MCF 10A (cell line): ENCODE measurements at regions of chr13 and their contacts with region 1.

Region 1: GRCh38 chr13:31044377-31045285 is 112.2 kb downstream of the TEX26 start:
- DNase-seq: peak; percentile 81
- H3K4me3 Mint-ChIP-seq: no peak overlapping the region
- H3K27ac Mint-ChIP-seq: peak overlapping the region; percentile 90
- H3K4me1 Mint-ChIP-seq: peaks cover 15% of the 10 kb centered on the region
- H3K27me3 Mint-ChIP-seq: no peaks in the 10 kb centered on the region
- CTCF ChIP-seq: peak; percentile 84

Region 2: GRCh38 chr13:30673669-30674521 is 370.7 kb before region 1 on chr13:
- CTCF ChIA-PET with region 1: interaction called, 3 read pairs
- POLR2A ChIA-PET with region 1: no interaction called
- intact Hi-C with region 1: loop called (anchors 2 kb)
- DNase-seq: peak; percentile 83
- H3K4me3 Mint-ChIP-seq: peak overlapping the region; percentile 75
- H3K27ac Mint-ChIP-seq: peak overlapping the region; percentile 16
- H3K4me1 Mint-ChIP-seq: no peaks in the 10 kb centered on the region
- H3K27me3 Mint-ChIP-seq: no peaks in the 10 kb centered on the region
- CTCF ChIP-seq: peak; percentile 54

Region 3: GRCh38 chr13:30865123-30866049 is 179.2 kb before region 1 on chr13:
- CTCF ChIA-PET with region 1: interaction called, 21 read pairs
- POLR2A ChIA-PET with region 1: interaction called, 8 read pairs
- intact Hi-C with region 1: loop called (anchors 10 kb)
- DNase-seq: peak; percentile 89
- H3K4me3 Mint-ChIP-seq: peak overlapping the region; percentile 38
- H3K27ac Mint-ChIP-seq: peak overlapping the region; percentile 85
- H3K4me1 Mint-ChIP-seq: peaks cover 38% of the 10 kb centered on the region
- H3K27me3 Mint-ChIP-seq: no peaks in the 10 kb centered on the region
- CTCF ChIP-seq: peak; percentile 93

Region 4: GRCh38 chr13:31094331-31095031 is 49.9 kb after region 1 on chr13:
- CTCF ChIA-PET with region 1: interaction called, 5 read pairs
- POLR2A ChIA-PET with region 1: interaction called, 43 read pairs
- intact Hi-C with region 1: no loop called
- DNase-seq: no peak
- H3K4me3 Mint-ChIP-seq: no peak overlapping the region
- H3K27ac Mint-ChIP-seq: no peak overlapping the region
- H3K4me1 Mint-ChIP-seq: peaks cover 39% of the 10 kb centered on the region
- H3K27me3 Mint-ChIP-seq: no peaks in the 10 kb centered on the region
- CTCF ChIP-seq: no peak

Region 5: DNA sequence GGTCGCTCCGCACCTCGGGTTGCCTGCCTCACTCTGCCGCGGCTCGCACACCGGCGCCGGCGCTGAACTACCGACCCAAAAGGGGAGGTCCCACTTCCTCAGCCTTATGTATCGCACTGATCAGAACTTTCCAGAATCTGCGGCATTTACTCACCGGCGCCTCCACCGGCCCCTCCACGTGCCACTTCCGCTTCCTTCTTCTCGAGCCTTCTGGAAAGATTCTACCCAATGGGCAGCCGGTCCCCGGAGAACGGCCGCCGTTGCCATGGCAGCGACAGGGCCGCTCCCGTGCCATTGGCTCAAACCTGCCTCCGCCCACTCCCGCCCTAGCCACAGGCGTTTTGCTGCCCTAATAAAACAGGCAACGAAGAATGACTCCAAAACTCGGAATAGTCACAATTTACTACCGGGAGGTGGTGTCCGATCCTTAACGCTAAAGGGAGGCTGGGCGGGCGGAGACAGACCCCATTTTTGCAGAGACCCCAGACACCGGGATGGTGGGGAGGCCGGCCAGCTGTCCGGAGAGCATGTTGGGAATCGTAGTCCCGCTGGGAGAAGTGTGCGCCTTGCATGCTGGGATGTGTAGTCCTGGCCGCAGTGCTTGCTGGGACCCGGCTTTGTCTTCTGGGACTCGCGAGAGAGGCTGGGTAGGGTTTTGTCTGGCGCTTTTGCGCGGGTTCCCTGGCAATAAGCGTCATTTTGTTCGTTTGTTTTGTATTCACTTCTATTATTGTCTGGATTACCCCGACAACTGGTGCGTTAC is 117.4 kb after region 1 on chr13 and contains the start of gene HSPH1:
- CTCF ChIA-PET with region 1: interaction called, 4 read pairs
- POLR2A ChIA-PET with region 1: interaction called, 28 read pairs
- intact Hi-C with region 1: loop called (anchors 2 kb)
- DNase-seq: peak; percentile 98
- H3K4me3 Mint-ChIP-seq: peak within 1 kb of the TSS; percentile 97
- H3K27ac Mint-ChIP-seq: peak within 1 kb of the TSS; percentile 97
- H3K4me1 Mint-ChIP-seq: peaks cover 31% of the 10 kb centered on the region
- H3K27me3 Mint-ChIP-seq: no peaks in the 10 kb centered on the region
- CTCF ChIP-seq: no peak
- total RNA-seq, gene HSPH1: 67.8 and 71.8 TPM in 2 replicates